ENCODE measurements at regions of chr6 and their contacts with region 1.

Region 1: GRCh38 chr6:159726918-159727716 is at the start of gene WTAP:
- DNase-seq: peak; percentile 93 to 99 (median 97)
- ATAC-seq: peak; percentile 80 to 82
- H3K4me3 Mint-ChIP-seq: peak within 1 kb of the TSS; percentile 88 to 96 (median 96)
- H3K27ac Mint-ChIP-seq: peak within 1 kb of the TSS; percentile 97 to 99 (median 99)
- H3K4me1 Mint-ChIP-seq: peaks cover 21 to 69% (median 57%) of the 10 kb centered on the region in 4 donors
- H3K27me3 Mint-ChIP-seq: peaks cover 0 to 2% (median 0%) of the 10 kb centered on the region in 5 donors
- polyA plus RNA-seq, gene WTAP: 104 to 128 (median 122) TPM

Region 2: DNA sequence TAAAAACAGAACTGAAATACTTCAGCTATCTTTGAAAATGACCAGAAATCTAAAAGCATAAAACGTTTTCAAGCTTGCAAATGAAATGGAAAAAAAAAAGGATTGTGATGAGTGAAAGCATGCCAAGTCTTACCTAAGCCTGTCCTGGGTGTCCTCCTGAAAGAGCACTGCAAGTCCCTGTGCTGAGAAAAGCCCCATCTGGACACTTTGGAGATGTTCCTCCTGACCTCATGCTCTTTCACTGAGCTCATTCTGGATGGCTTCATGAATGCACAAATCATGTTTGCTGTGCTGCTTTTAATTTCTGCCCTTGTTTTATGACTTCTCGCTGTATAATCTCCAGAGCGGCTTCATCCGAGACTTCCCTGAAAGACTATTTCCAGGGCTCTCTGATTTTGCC is 170.1 kb before region 1 on chr6:
- POLR2A ChIA-PET with region 1: no interaction called
- DNase-seq: no peak
- ATAC-seq: no peak
- H3K4me3 Mint-ChIP-seq: no peak overlapping the region
- H3K27ac Mint-ChIP-seq: no peak overlapping the region
- H3K4me1 Mint-ChIP-seq: no peaks in the 10 kb centered on the region
- H3K27me3 Mint-ChIP-seq: peaks cover 9 to 29% (median 21%) of the 10 kb centered on the region in 5 donors

Region 3: DNA sequence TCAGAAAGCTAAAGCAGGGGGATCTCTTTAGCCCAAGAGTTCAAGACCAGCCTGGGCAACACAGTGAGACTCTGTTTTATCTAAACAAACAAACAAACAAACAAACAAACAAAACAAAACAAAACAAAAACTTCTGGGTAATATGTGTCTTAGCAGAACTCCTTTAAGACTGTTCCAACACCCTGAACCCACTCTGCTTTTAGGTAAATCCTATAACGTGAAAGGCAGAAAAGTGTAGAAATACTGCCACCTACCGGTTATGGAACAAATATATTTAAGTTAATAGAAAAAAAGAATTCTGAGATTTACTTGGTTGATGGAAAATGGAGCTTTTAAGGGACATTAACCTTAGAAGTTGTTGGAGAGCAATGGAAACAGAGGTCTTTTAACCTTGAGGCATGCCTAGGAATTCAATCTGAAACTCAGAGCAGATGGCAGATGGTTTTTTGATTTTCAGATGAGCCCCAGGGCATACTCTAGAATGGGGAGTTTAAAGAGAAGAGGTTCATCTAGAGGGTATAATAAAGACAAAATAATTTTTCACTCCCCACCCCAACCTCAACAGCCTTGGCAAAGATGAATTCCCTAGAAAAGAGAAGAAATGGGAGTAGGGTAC is 72.5 kb before region 1 on chr6:
- POLR2A ChIA-PET with region 1: no interaction called
- DNase-seq: peak in 3 of 10 donors; percentile 42 to 53 (median 49)
- ATAC-seq: peak in 1 of 2 donors; percentile 36
- H3K4me3 Mint-ChIP-seq: no peak overlapping the region
- H3K27ac Mint-ChIP-seq: peak overlapping the region in 1 of 10 donors; percentile 20
- H3K4me1 Mint-ChIP-seq: no peaks in the 10 kb centered on the region
- H3K27me3 Mint-ChIP-seq: no peaks in the 10 kb centered on the region

Region 4: DNA sequence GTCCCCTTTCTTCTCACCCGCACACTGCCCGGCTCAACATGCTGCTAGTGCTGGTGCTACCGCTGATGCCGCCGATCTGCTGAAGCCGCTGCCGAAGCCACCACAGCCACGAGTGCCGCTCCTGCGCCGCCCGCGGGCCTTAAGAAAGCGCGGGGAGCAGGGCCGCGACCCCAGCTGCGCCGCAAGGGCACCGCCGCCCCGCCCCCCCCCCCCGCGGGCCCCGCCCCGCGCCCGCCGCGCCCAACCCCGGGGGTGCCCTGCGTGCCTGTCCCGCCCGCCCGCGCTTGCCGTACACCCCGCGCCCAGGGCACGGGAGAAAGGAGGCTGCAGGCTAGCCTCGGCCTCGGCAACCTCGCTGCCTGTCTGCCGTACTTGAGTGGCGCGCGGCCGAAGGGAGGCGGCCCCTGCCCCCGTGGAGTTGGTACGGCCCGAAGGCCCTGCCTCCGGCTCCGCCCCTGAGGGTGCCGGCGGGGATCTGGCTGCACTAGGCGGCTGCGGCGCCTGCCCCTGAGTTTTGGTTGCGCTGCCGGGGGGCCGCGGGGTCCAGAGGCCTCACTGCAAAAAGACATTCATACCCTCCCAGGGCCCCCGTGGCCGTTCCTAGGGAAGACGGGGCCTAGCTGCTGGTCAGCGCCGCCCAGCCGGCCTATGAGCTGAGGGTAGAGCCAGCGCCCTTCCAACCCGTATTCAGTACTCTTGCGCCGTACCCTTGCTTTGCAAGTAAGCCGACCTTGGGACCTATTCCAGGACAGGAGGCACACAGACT is 33.8 kb before region 1 on chr6 and contains the start of gene SOD2:
- POLR2A ChIA-PET with region 1: interaction called, 142 read pairs
- DNase-seq: peak; percentile 70 to 95 (median 84)
- ATAC-seq: peak; percentile 74 to 77
- H3K4me3 Mint-ChIP-seq: peak within 1 kb of the TSS; percentile 88 to 97 (median 94)
- H3K27ac Mint-ChIP-seq: peak within 1 kb of the TSS; percentile 35 to 98 (median 96)
- H3K4me1 Mint-ChIP-seq: peaks cover 29 to 45% (median 45%) of the 10 kb centered on the region in 4 donors
- H3K27me3 Mint-ChIP-seq: no peaks in the 10 kb centered on the region
- polyA plus RNA-seq, gene SOD2: 80.5 to 92.0 (median 90.0) TPM

Region 5: DNA sequence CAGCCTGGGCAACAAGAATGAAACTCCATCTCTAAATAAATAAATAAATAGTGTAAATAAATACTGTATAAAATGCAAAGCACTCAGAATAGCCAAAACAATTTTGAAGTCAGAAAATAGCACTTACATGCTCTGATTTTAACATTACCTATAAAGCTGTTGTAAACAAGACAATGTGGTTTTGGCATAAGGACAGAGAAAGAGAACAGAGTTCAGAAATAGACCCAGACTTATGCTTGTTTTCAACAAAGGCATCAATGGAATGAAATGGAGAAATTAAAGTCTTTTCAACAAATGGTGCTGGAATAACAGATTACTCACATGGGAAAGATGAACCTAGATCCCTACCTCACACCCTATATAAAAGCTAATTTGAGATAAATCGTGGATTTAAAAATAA is 45.1 kb after region 1 on chr6:
- POLR2A ChIA-PET with region 1: no interaction called
- DNase-seq: no peak
- ATAC-seq: no peak
- H3K4me3 Mint-ChIP-seq: no peak overlapping the region
- H3K27ac Mint-ChIP-seq: no peak overlapping the region
- H3K4me1 Mint-ChIP-seq: no peaks in the 10 kb centered on the region
- H3K27me3 Mint-ChIP-seq: no peaks in the 10 kb centered on the region

Region 6: DNA sequence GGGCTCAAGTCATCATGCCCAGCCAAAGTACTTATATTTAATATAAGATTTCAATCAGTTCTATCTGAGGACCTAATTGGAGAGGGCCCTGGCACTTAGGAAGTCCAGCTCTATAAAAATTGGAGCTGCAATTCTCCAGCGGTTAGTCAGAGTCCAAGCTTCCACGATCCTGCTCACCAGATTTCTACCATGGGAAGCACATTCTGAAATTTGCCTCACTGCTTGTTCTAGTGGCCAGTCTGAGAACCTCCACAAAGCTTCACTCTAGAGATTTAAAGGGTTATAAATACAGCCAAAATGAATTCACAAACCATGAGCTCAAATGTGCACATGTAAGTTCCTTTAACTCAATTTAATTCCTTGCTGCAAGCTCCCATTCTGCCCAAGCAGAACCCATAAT is 106.4 kb after region 1 on chr6:
- POLR2A ChIA-PET with region 1: interaction called, 14 read pairs
- DNase-seq: no peak
- ATAC-seq: peak; percentile 35 to 36
- H3K4me3 Mint-ChIP-seq: peak overlapping the region in 6 of 10 donors; percentile 26 to 47 (median 32)
- H3K27ac Mint-ChIP-seq: peak overlapping the region in 9 of 10 donors; percentile 13 to 87 (median 63)
- H3K4me1 Mint-ChIP-seq: peaks cover 17 to 59% (median 49%) of the 10 kb centered on the region in 4 donors
- H3K27me3 Mint-ChIP-seq: no peaks in the 10 kb centered on the region